Endothelial cell of umbilical vein (primary cell): ENCODE measurements at regions of chr12 and their contacts with region 1.

Region 1: DNA sequence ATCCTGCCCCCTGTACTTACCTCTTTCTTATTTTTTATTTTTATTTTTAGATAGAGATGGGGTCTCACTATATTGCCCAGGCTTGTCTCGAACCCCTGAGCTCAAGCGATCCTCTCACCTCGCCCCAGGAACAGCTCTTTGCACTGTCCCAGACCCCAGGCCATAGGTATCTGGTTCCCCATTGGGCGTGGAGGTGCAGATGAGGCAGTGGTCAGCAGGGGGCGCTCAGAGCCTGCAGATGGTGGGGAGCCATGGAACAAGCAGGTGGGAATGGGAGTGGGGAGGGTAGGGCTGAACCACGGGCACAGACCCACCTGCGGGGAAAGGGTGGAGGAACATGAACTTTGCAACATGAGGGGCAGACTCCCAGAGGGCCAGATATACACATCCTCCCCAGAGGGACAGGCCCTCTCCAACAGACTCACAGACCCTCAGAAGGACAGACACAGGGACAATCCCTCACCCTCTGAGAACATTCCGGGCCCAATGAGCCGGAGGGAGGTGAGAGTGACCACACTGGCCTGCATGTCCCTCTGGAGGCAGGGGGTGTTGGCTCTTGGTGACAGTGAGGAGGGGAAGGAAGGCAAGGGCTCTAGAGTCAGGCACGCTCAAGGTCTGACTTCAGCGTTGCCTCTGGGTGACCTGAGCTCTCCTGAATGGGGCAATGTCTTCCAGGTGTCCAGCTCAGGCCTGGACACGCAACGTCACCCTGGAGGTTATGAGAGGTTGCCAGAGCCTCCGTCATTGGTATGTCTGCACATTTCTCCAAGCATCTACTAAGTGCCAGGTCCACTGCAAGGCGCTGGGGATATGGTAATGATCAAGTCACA is 34.9 kb downstream of the KRT80 start:
- DNase-seq: peak; percentile 58
- H3K4me3 ChIP-seq: no peak overlapping the region
- H3K27ac ChIP-seq: no peak overlapping the region
- H3K4me1 ChIP-seq: peaks cover 2% of the 10 kb centered on the region
- H3K27me3 ChIP-seq: no peaks in the 10 kb centered on the region
- CTCF ChIP-seq: peak; percentile 93 to 94
- POLR2A ChIP-seq: no peak

Region 2: GRCh38 chr12:51863933-51864832 is 292.8 kb before region 1 on chr12:
- CTCF ChIA-PET with region 1: no interaction called
- POLR2A ChIA-PET with region 1: no interaction called
- dilution Hi-C with region 1: no loop called
- intact Hi-C with region 1: no loop called
- DNase-seq: no peak
- H3K4me3 ChIP-seq: no peak overlapping the region
- H3K27ac ChIP-seq: no peak overlapping the region
- H3K4me1 ChIP-seq: peaks cover 6% of the 10 kb centered on the region
- H3K27me3 ChIP-seq: no peaks in the 10 kb centered on the region
- CTCF ChIP-seq: no peak
- POLR2A ChIP-seq: no peak

Region 3: GRCh38 chr12:51905471-51906429 is 251.2 kb before region 1 on chr12:
- CTCF ChIA-PET with region 1: no interaction called
- POLR2A ChIA-PET with region 1: no interaction called
- dilution Hi-C with region 1: no loop called
- intact Hi-C with region 1: no loop called
- DNase-seq: peak; percentile 90
- H3K4me3 ChIP-seq: peak overlapping the region in 2 of 3 experiments; percentile 10 to 92
- H3K27ac ChIP-seq: peak overlapping the region; percentile 99
- H3K4me1 ChIP-seq: peaks cover 66% of the 10 kb centered on the region
- H3K27me3 ChIP-seq: no peaks in the 10 kb centered on the region
- CTCF ChIP-seq: no peak
- POLR2A ChIP-seq: peak; percentile 48

Region 4: DNA sequence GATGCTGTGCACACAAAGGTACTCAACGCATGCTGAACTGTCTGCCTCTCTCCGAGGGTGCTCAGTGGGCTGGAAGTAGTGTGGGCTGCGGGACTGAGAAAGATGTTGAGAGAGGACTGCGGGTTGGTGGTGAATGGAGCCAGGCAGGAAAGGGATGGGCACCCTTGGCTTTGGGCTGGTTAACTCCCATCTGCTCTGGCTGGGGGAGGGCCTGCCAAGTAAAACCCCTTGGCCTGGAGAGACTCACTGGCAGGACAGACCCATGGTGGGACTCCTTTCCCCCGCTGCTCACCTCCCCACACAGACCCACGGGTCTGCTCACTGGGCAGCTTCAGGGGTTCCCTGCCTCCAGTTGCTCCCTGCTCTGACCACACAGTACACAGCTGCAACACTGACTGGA is 19.2 kb before region 1 on chr12:
- CTCF ChIA-PET with region 1: no interaction called
- POLR2A ChIA-PET with region 1: no interaction called
- dilution Hi-C with region 1: no loop called
- intact Hi-C with region 1: no loop called
- DNase-seq: no peak
- H3K4me3 ChIP-seq: no peak overlapping the region
- H3K27ac ChIP-seq: no peak overlapping the region
- H3K4me1 ChIP-seq: no peaks in the 10 kb centered on the region
- H3K27me3 ChIP-seq: peaks cover 4% of the 10 kb centered on the region in 2 experiments
- CTCF ChIP-seq: no peak
- POLR2A ChIP-seq: no peak

Region 5: GRCh38 chr12:52295663-52296062 is 138.7 kb after region 1 on chr12:
- CTCF ChIA-PET with region 1: no interaction called
- POLR2A ChIA-PET with region 1: no interaction called
- dilution Hi-C with region 1: no loop called
- intact Hi-C with region 1: no loop called
- DNase-seq: no peak
- H3K4me3 ChIP-seq: no peak overlapping the region
- H3K27ac ChIP-seq: no peak overlapping the region
- H3K4me1 ChIP-seq: no peaks in the 10 kb centered on the region
- H3K27me3 ChIP-seq: peaks cover 39 to 58% of the 10 kb centered on the region in 2 experiments
- CTCF ChIP-seq: no peak
- POLR2A ChIP-seq: no peak

Region 6: GRCh38 chr12:52307836-52308805 is 151.2 kb after region 1 on chr12:
- CTCF ChIA-PET with region 1: interaction called, 11 read pairs
- POLR2A ChIA-PET with region 1: no interaction called
- dilution Hi-C with region 1: no loop called
- intact Hi-C with region 1: no loop called
- DNase-seq: peak; percentile 13
- H3K4me3 ChIP-seq: no peak overlapping the region
- H3K27ac ChIP-seq: no peak overlapping the region
- H3K4me1 ChIP-seq: no peaks in the 10 kb centered on the region
- H3K27me3 ChIP-seq: peaks cover 59 to 62% of the 10 kb centered on the region in 2 experiments
- CTCF ChIP-seq: peak in 1 of 2 donors; percentile 12
- POLR2A ChIP-seq: no peak

Region 7: GRCh38 chr12:52372216-52373154 is 215.5 kb after region 1 on chr12:
- CTCF ChIA-PET with region 1: interaction called, 19 read pairs
- POLR2A ChIA-PET with region 1: no interaction called
- dilution Hi-C with region 1: no loop called
- intact Hi-C with region 1: loop called (anchors 2 kb)
- DNase-seq: peak; percentile 73
- H3K4me3 ChIP-seq: no peak overlapping the region
- H3K27ac ChIP-seq: no peak overlapping the region
- H3K4me1 ChIP-seq: no peaks in the 10 kb centered on the region
- H3K27me3 ChIP-seq: peaks cover 13 to 19% of the 10 kb centered on the region in 2 experiments
- CTCF ChIP-seq: peak; percentile 69 to 77
- POLR2A ChIP-seq: no peak